ENCODE measurements at regions of chr3 and their contacts with region 1.

Region 1: GRCh38 chr3:51311055-51311454 is 74.0 kb upstream of the MANF start:
- DNase-seq: peak in 7 of 9 donors; percentile 4 to 53 (median 39)
- ATAC-seq: peak; percentile 32
- H3K4me3 ChIP-seq: no peak overlapping the region
- H3K4me3 Mint-ChIP-seq: no peak overlapping the region
- H3K27ac ChIP-seq: no peak overlapping the region
- H3K27ac Mint-ChIP-seq: no peak overlapping the region
- H3K4me1 ChIP-seq: no peaks in the 10 kb centered on the region
- H3K4me1 Mint-ChIP-seq: peaks cover 0 to 10% (median 0%) of the 10 kb centered on the region in 7 donors
- H3K27me3 ChIP-seq: peaks cover 0 to 7% of the 10 kb centered on the region in 2 donors
- H3K27me3 Mint-ChIP-seq: no peaks in the 10 kb centered on the region

Region 2: DNA sequence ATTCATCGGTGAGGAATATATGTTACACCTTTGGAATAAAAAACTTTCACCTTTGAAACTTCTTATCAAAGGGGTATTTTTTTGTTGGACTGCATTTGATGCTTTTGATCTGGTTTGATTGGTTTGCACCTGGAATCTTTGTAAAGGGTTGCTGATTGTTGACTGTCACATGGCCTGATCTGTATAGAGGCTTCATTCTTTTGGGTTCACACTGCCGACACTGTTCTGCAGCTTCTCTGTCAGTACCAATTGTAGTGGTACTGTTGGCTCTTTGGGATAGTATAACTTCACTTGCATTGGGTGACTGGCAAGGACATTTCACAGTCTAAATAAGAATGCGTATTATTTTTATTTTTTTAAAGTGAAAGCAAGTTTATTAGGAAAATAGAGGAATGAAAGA is 480.6 kb before region 1 on chr3:
- CTCF ChIA-PET with region 1: no interaction called
- POLR2A ChIA-PET with region 1: no interaction called
- intact Hi-C with region 1: no loop called
- DNase-seq: no peak
- ATAC-seq: no peak
- H3K4me3 ChIP-seq: no peak overlapping the region
- H3K4me3 Mint-ChIP-seq: no peak overlapping the region
- H3K27ac ChIP-seq: no peak overlapping the region
- H3K27ac Mint-ChIP-seq: no peak overlapping the region
- H3K4me1 ChIP-seq: no peaks in the 10 kb centered on the region
- H3K4me1 Mint-ChIP-seq: peaks cover 0 to 12% (median 0%) of the 10 kb centered on the region in 7 donors
- H3K27me3 ChIP-seq: no peaks in the 10 kb centered on the region
- H3K27me3 Mint-ChIP-seq: peaks cover 0 to 14% (median 7%) of the 10 kb centered on the region in 5 donors

Region 3: GRCh38 chr3:51099794-51100535 is 211.1 kb before region 1 on chr3:
- CTCF ChIA-PET with region 1: no interaction called
- POLR2A ChIA-PET with region 1: no interaction called
- intact Hi-C with region 1: no loop called
- DNase-seq: peak in 1 of 9 donors; percentile 5
- ATAC-seq: peak; percentile 20
- H3K4me3 ChIP-seq: no peak overlapping the region
- H3K4me3 Mint-ChIP-seq: peak overlapping the region in 1 of 10 donors; percentile 43
- H3K27ac ChIP-seq: no peak overlapping the region
- H3K27ac Mint-ChIP-seq: peak overlapping the region in 3 of 9 donors; percentile 45 to 82 (median 75)
- H3K4me1 ChIP-seq: no peaks in the 10 kb centered on the region
- H3K4me1 Mint-ChIP-seq: peaks cover 3 to 27% (median 16%) of the 10 kb centered on the region in 7 donors
- H3K27me3 ChIP-seq: no peaks in the 10 kb centered on the region
- H3K27me3 Mint-ChIP-seq: peaks cover 0 to 2% (median 0%) of the 10 kb centered on the region in 5 donors

Region 4: GRCh38 chr3:51269466-51269865 is 41.6 kb before region 1 on chr3:
- CTCF ChIA-PET with region 1: interaction called, 7 read pairs
- POLR2A ChIA-PET with region 1: no interaction called
- intact Hi-C with region 1: loop called in 1 of 2 experiments (anchors 1 kb)
- DNase-seq: no peak
- ATAC-seq: no peak
- H3K4me3 ChIP-seq: no peak overlapping the region
- H3K4me3 Mint-ChIP-seq: peak overlapping the region in 5 of 10 donors; percentile 2 to 80 (median 21)
- H3K27ac ChIP-seq: no peak overlapping the region
- H3K27ac Mint-ChIP-seq: peak overlapping the region in 6 of 9 donors; percentile 45 to 99 (median 96)
- H3K4me1 ChIP-seq: peaks cover 6 to 32% of the 10 kb centered on the region in 2 donors
- H3K4me1 Mint-ChIP-seq: peaks cover 10 to 59% (median 51%) of the 10 kb centered on the region in 7 donors
- H3K27me3 ChIP-seq: no peaks in the 10 kb centered on the region
- H3K27me3 Mint-ChIP-seq: no peaks in the 10 kb centered on the region

Region 5: DNA sequence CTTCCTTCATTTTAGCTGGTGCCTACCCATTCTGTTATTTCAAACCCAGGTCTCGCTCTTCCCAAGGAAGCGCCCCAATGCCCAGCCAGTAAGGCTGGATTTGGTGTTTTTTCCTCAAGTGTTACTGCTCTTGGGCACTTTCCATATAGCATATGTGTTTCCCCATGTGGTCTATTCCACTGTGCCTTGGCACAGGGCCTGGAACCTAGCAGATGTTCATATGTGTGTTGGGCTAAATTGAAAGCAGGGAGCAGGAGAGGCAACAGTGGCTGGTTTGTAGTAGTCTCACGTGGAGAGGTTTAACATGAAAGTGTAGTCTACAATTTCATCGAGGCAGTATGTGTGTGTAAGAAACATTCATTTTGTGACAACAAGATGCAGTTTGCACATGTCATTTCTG is 311.8 kb after region 1 on chr3:
- CTCF ChIA-PET with region 1: no interaction called
- POLR2A ChIA-PET with region 1: no interaction called
- intact Hi-C with region 1: no loop called
- DNase-seq: no peak
- ATAC-seq: no peak
- H3K4me3 ChIP-seq: no peak overlapping the region
- H3K4me3 Mint-ChIP-seq: no peak overlapping the region
- H3K27ac ChIP-seq: no peak overlapping the region
- H3K27ac Mint-ChIP-seq: no peak overlapping the region
- H3K4me1 ChIP-seq: no peaks in the 10 kb centered on the region
- H3K4me1 Mint-ChIP-seq: peaks cover 8 to 31% (median 21%) of the 10 kb centered on the region in 7 donors
- H3K27me3 ChIP-seq: no peaks in the 10 kb centered on the region
- H3K27me3 Mint-ChIP-seq: no peaks in the 10 kb centered on the region

Region 6: DNA sequence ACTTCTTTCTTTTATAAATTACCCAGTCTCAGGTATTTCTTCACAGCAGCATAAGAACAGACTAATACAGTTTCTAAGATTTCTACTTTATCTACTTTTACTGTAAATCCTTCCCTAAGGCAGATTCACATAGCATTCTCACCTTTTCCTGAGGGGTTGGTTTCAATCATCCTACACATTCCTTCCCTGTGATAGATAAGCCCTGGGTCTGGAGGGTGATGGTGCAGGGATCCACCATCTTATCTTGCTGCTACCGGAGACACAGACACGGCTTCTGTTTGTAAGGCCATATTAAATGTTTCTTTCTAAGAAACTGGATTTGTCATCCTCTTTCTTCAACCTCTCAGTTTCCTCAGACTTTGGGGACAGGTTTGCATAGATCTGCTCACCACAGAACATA is 558.2 kb after region 1 on chr3:
- CTCF ChIA-PET with region 1: no interaction called
- POLR2A ChIA-PET with region 1: no interaction called
- intact Hi-C with region 1: no loop called
- DNase-seq: no peak
- ATAC-seq: no peak
- H3K4me3 ChIP-seq: no peak overlapping the region
- H3K4me3 Mint-ChIP-seq: no peak overlapping the region
- H3K27ac ChIP-seq: no peak overlapping the region
- H3K27ac Mint-ChIP-seq: no peak overlapping the region
- H3K4me1 ChIP-seq: no peaks in the 10 kb centered on the region
- H3K4me1 Mint-ChIP-seq: peaks cover 0 to 1% (median 0%) of the 10 kb centered on the region in 7 donors
- H3K27me3 ChIP-seq: peaks cover 0 to 3% of the 10 kb centered on the region in 2 donors
- H3K27me3 Mint-ChIP-seq: peaks cover 5 to 41% (median 24%) of the 10 kb centered on the region in 5 donors